SK-N-SH (cell line): ENCODE measurements at regions of chr22 and their contacts with region 1.

Region 1: GRCh38 chr22:40436505-40437451 is 66.4 kb downstream of the SGSM3 start:
- DNase-seq: peak; percentile 39
- H3K4me3 ChIP-seq: no peak overlapping the region
- H3K27ac ChIP-seq: peak overlapping the region in 1 of 2 experiments; percentile 46; a peak in 2 of 4 replicates
- H3K4me1 ChIP-seq: no peaks in the 10 kb centered on the region
- H3K27me3 ChIP-seq: no peaks in the 10 kb centered on the region
- CTCF ChIP-seq: peak; percentile 60
- EP300 ChIP-seq: no peak
- RAD21 ChIP-seq: peak; percentile 60

Region 2: GRCh38 chr22:40449676-40450035 is 12.9 kb after region 1 on chr22:
- CTCF ChIA-PET with region 1: interaction called, 12 read pairs
- POLR2A ChIA-PET with region 1: no interaction called
- DNase-seq: no peak
- H3K4me3 ChIP-seq: no peak overlapping the region
- H3K27ac ChIP-seq: peak overlapping the region in 1 of 2 experiments; percentile 26; a peak in 1 of 4 replicates
- H3K4me1 ChIP-seq: peaks cover 5 to 7% of the 10 kb centered on the region in 2 experiments; a peak in 2 of 4 replicates
- H3K27me3 ChIP-seq: no peaks in the 10 kb centered on the region
- CTCF ChIP-seq: no peak
- EP300 ChIP-seq: no peak
- RAD21 ChIP-seq: no peak

Region 3: DNA sequence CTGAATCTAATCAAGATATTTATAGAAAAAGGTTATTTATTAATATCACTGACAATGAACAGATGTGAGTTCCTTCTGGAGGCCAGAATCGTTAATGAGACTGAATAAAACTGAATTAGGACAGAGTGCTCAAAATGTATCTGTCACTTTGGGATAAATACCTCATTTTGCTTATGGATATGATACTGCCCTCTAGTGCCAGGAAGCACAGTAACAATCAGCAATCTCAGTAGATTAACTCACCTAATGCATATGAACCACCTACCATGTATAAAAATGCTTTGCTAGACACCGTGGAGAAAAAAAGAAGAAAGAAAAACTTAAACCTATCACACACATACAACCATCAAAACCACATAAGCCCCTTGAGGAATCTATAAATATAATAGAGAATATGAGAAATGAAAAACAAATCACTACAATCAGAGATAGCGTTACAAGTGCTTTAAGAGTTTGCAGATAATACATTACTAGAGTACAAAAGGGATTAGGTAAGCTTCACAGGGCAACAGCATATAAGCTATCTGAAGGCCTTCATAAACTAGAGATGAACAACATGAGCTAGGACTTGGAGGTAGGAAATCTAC is 51.0 kb after region 1 on chr22:
- CTCF ChIA-PET with region 1: interaction called, 10 read pairs
- POLR2A ChIA-PET with region 1: no interaction called
- DNase-seq: peak; percentile 31
- H3K4me3 ChIP-seq: no peak overlapping the region
- H3K27ac ChIP-seq: peak overlapping the region in 1 of 2 experiments; percentile 59; a peak in 1 of 4 replicates
- H3K4me1 ChIP-seq: peaks cover 7 to 24% of the 10 kb centered on the region in 2 experiments; a peak in 2 of 4 replicates
- H3K27me3 ChIP-seq: no peaks in the 10 kb centered on the region
- CTCF ChIP-seq: peak; percentile 65
- EP300 ChIP-seq: no peak
- RAD21 ChIP-seq: peak; percentile 55

Region 4: DNA sequence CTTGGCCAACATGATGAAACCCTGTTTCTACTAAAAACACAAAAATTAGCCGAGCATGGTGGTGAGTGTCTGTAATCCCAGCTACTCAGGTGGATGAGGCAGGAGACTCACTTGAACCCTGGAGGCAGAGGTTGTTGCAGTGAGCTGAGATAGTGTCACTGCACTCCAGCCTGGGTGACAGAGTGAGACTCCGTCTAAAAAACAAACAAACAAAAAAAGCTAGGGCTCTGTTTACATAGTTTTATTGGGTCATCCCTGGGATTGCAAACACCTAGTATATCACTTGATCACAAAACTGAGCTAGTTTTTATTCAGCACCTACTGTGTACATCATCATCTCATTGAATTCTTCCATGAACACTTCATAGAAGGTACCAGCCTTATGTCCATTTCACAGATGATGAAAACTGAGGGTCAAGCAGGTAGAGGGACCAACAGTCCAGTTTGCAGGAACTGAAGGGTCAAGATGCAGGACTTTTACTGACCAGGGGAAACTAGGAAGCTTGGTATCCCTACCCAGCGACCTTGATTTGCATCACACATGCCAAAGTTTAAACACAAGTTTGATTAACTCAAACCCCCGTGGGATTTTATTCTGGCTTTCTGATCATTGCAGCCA is 208.9 kb after region 1 on chr22:
- CTCF ChIA-PET with region 1: interaction called, 49 read pairs
- POLR2A ChIA-PET with region 1: no interaction called
- DNase-seq: no peak
- H3K4me3 ChIP-seq: no peak overlapping the region
- H3K27ac ChIP-seq: peak overlapping the region in 1 of 2 experiments; percentile 47; a peak in 1 of 4 replicates
- H3K4me1 ChIP-seq: no peaks in the 10 kb centered on the region
- H3K27me3 ChIP-seq: no peaks in the 10 kb centered on the region
- CTCF ChIP-seq: no peak
- EP300 ChIP-seq: no peak
- RAD21 ChIP-seq: no peak

Region 5: DNA sequence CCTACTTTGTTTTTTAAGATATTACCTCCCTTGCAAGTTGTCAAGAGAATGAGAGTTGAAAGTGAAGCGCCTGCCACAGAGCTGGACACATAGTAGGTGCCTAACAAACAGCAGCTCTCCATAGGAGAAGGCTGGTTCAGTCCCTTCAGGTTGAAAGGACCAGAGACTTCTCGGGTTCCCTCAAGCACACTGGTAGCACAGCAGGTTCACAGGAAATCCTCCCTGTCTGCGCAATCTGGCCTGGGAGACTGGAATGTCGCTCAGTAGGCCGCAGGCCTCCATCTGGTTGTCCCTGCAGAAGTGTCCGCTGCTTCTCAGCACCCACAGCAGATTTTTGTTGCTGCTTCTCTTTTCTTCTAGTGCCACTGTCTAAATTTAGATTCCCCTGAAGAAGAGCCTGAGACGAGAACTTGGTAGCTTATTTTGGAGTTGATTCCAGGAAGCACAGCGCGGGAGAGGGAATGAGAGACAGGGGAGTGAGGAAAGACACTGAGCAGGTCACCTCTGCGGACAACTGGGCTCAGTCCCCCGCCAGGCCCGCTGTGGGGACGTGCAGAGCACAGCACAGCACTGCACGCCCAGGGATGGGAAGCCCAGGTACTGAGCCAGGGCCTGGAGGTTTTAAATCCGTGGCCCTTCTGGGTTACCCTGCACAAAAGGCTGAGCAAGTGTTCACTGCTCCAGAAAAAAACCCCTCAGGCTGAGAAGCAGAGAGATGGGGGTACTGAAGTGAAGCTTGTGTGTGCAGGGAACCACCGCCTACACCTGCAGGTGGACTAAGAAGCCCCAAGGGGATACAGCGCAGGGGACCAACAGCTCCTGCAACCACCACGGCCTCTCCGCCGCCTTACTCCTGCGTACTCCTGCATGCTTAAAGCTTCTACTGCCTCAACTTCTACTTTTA is 546.0 kb after region 1 on chr22:
- CTCF ChIA-PET with region 1: no interaction called
- POLR2A ChIA-PET with region 1: no interaction called
- DNase-seq: no peak
- H3K4me3 ChIP-seq: no peak overlapping the region
- H3K27ac ChIP-seq: no peak overlapping the region
- H3K4me1 ChIP-seq: no peaks in the 10 kb centered on the region
- H3K27me3 ChIP-seq: no peaks in the 10 kb centered on the region
- CTCF ChIP-seq: no peak
- EP300 ChIP-seq: no peak
- RAD21 ChIP-seq: no peak